K562 (cell line): ENCODE measurements at regions of chr1 and their contacts with region 1.

Region 1: DNA sequence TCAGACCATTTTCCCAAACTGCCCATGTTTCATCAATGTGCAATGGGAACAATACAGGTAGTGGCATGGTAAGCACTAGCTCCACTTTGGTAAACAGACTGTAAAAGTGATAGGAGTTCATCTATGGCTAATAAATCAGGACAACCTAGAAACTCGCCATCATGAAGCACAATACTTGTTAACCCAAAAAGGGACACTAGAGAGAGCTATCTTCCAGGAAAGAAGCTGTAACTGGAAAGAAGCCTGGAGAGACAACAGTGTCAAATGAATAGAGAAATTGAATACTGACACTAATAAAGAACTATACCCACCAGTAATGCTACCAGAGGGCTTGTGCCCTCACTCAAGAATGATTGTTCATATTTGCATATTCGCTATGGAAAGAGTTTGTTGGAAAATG is 164.7 kb upstream of the RGS18 start:
- DNase-seq: peak in 1 of 4 experiments; percentile 27
- ATAC-seq: peak; percentile 78
- H3K4me3 ChIP-seq: no peak overlapping the region
- H3K27ac ChIP-seq: no peak overlapping the region
- H3K4me1 ChIP-seq: no peaks in the 10 kb centered on the region
- H3K27me3 ChIP-seq: no peaks in the 10 kb centered on the region
- CTCF ChIP-seq: peak; percentile 33 to 40 (median 39); a peak in 3 of 6 replicates
- EP300 ChIP-seq: no peak
- POLR2A ChIP-seq: no peak
- RAD21 ChIP-seq: peak in 1 of 2 experiments; percentile 81; a peak in 3 of 4 replicates

Region 2: DNA sequence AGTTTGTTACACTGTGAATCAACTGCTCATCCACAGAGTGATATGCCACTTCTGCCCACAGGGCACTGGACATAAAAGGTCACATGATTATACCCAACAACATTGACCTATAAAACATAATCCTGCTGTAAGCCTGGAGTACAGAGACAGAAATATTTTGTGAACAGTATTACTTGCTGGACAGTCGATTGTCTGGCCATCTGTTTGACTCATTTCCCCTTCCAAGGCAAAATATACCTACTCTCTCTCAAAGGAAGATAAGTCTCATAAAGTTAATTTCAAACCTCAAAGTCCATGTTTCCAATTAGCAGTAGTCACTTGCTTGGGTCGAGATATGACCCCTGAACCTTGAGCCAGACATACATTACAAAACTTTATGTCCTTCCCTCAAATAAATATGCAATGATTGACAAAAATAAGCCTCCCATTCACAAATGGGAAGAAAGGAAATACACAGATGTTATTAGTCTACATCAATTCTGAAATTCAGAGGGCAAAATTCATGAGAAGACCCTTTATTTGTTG is 125.4 kb after region 1 on chr1:
- CTCF ChIA-PET with region 1: no interaction called
- POLR2A ChIA-PET with region 1: no interaction called
- in situ Hi-C with region 1: no loop called
- intact Hi-C with region 1: no loop called
- DNase-seq: no peak
- ATAC-seq: no peak
- H3K4me3 ChIP-seq: no peak overlapping the region
- H3K27ac ChIP-seq: 0 out of 3 replicates have a peak overlapping the region, but pooled peaks have one; percentile 13
- H3K4me1 ChIP-seq: peaks cover 0 to 11% of the 10 kb centered on the region in 2 experiments; a peak in 2 of 5 replicates
- H3K27me3 ChIP-seq: no peaks in the 10 kb centered on the region
- CTCF ChIP-seq: no peak
- EP300 ChIP-seq: no peak
- POLR2A ChIP-seq: no peak
- RAD21 ChIP-seq: no peak

Region 3: DNA sequence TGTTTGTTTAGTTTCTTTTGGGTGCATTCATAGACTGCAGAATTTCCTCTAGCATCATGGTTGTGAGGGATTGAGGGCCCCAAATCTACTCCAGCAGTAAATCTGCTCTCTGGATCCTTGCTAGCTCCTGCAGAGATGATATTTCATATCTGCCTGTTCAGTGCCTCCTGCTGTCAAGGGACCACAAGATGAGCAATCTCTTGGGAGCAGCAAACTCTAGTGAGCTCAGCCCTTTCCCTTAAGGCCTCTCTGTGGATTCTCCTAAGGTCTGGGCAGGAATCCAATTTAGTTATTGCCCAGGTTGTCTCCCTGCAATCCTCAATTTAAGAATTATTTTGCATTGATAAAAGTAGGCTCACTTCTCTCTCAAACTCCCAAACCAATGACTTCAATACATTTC is 241.6 kb after region 1 on chr1:
- CTCF ChIA-PET with region 1: no interaction called
- POLR2A ChIA-PET with region 1: no interaction called
- in situ Hi-C with region 1: no loop called
- intact Hi-C with region 1: loop called (anchors 5 kb)
- DNase-seq: peak in 2 of 4 experiments; percentile 14 to 53
- ATAC-seq: peak; percentile 75
- H3K4me3 ChIP-seq: no peak overlapping the region
- H3K27ac ChIP-seq: no peak overlapping the region
- H3K4me1 ChIP-seq: no peaks in the 10 kb centered on the region
- H3K27me3 ChIP-seq: no peaks in the 10 kb centered on the region
- CTCF ChIP-seq: no peak
- EP300 ChIP-seq: no peak
- POLR2A ChIP-seq: no peak
- RAD21 ChIP-seq: peak; percentile 11 to 29; a peak in 2 of 4 replicates

Region 4: DNA sequence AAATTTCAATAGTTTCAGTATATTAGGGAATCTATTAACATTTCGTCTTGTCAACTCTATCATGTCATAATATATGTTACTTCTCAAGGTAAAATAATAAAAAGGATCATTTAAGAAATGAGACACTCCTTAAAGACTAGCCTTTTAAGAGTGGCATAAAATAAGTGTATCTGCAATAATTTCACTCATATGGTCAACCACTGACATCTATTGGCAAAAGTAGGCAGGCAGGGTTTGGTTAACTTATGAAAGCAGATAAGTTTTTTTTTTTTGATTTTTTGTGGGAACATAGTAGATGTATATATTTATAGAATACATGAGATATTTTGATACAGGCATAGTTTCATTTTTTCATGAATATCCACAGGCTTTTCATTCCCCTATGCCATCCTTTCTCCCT is 317.7 kb after region 1 on chr1:
- CTCF ChIA-PET with region 1: no interaction called
- POLR2A ChIA-PET with region 1: no interaction called
- in situ Hi-C with region 1: no loop called
- intact Hi-C with region 1: loop called (anchors 2 kb)
- DNase-seq: peak in 2 of 4 experiments; percentile 28 to 56
- ATAC-seq: peak; percentile 72
- H3K4me3 ChIP-seq: no peak overlapping the region
- H3K27ac ChIP-seq: no peak overlapping the region
- H3K4me1 ChIP-seq: no peaks in the 10 kb centered on the region
- H3K27me3 ChIP-seq: no peaks in the 10 kb centered on the region
- CTCF ChIP-seq: peak in 2 of 3 experiments; percentile 45 to 62; a peak in 3 of 6 replicates
- EP300 ChIP-seq: no peak
- POLR2A ChIP-seq: no peak
- RAD21 ChIP-seq: peak; percentile 68 to 82